Heart left ventricle (tissue), 16 donors: ENCODE measurements at regions of chr18 and their contacts with region 1.

Region 1: GRCh38 chr18:37742436-37742835 is 176.8 kb upstream of the CELF4 start:
- DNase-seq: no peak
- ATAC-seq: no peak
- H3K4me3 ChIP-seq: no peak overlapping the region
- H3K27ac ChIP-seq: no peak overlapping the region
- H3K4me1 ChIP-seq: no peaks in the 10 kb centered on the region
- H3K27me3 ChIP-seq: peaks cover 0 to 6% (median 0%) of the 10 kb centered on the region in 9 donors
- CTCF ChIP-seq: no peak
- POLR2A ChIP-seq: no peak

Region 2: DNA sequence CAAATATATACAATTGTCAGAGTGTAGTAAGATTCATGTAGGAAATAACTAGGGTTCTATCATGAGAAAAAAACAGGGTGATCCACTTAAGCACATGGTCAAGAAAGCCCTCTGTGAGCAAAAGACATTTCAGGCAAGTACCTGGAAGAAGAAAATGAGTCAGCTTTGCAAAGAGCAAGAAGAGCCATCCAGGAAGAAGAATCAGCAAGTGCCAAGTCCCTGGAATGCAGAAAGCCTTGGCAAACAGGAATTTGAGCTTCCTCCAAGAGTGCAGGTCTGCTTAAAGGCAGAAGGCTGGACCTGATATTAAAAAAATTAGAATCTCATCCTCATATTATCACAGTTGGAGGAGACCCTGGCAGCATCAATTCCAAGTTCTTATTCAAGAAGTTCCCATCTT is 11.7 kb after region 1 on chr18:
- intact Hi-C with region 1: loop called in 1 of 10 experiments (anchors 1 kb)
- DNase-seq: no peak
- ATAC-seq: no peak
- H3K4me3 ChIP-seq: no peak overlapping the region
- H3K27ac ChIP-seq: no peak overlapping the region
- H3K4me1 ChIP-seq: no peaks in the 10 kb centered on the region
- H3K27me3 ChIP-seq: peaks cover 0 to 7% (median 0%) of the 10 kb centered on the region in 9 donors
- CTCF ChIP-seq: no peak
- POLR2A ChIP-seq: no peak